Astrocyte of the cerebellum (primary cell): ENCODE measurements at regions of chr4 and their contacts with region 1.

Region 1: GRCh38 chr4:124753941-124754581 is 41.5 kb upstream of the ANKRD50 start:
- DNase-seq: no peak
- H3K4me3 ChIP-seq: no peak overlapping the region
- CTCF ChIP-seq: no peak

Region 2: GRCh38 chr4:124691801-124692200 is 62.3 kb before region 1 on chr4:
- in situ Hi-C with region 1: no loop called
- DNase-seq: no peak
- H3K4me3 ChIP-seq: no peak overlapping the region
- CTCF ChIP-seq: no peak

Region 3: DNA sequence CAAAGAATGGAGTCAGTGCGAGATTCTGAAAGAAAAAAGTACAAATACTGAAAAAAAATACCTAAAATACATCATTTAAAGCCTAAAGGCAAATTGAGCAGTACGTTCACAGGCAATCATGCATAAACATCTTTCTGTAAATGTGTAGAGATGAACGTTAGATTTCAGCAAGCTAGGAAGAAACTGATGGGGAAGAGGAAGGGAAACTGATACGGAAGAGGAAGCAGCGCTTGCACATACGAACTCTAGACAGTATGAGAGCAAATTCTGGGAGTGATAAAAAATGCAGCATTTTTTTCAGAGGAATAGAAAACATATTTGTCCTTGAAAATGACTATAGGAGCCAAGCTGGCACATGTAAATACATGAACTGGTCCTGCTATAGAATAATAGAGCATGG is 50.9 kb before region 1 on chr4:
- in situ Hi-C with region 1: loop called (anchors 5 kb)
- DNase-seq: no peak
- H3K4me3 ChIP-seq: no peak overlapping the region
- CTCF ChIP-seq: no peak

Region 4: GRCh38 chr4:124803641-124804040 is 49.6 kb after region 1 on chr4:
- in situ Hi-C with region 1: no loop called
- DNase-seq: no peak
- H3K4me3 ChIP-seq: no peak overlapping the region
- CTCF ChIP-seq: no peak